Activated naive CD4-positive, alpha-beta T cell treated with anti-CD3 and anti-CD28 coated beads for 36 hours (primary cell): ENCODE measurements at regions of chr6 and their contacts with region 1.

Region 1: GRCh38 chr6:121055572-121056163 is 278.6 kb downstream of the TBC1D32 start:
- DNase-seq: no peak
- H3K4me3 Mint-ChIP-seq: no peak overlapping the region
- H3K27ac Mint-ChIP-seq: no peak overlapping the region
- H3K4me1 Mint-ChIP-seq: no peaks in the 10 kb centered on the region
- H3K27me3 Mint-ChIP-seq: no peaks in the 10 kb centered on the region

Region 2: GRCh38 chr6:119742188-119742803 is 1313.4 kb before region 1 on chr6:
- CTCF ChIA-PET with region 1: no interaction called
- intact Hi-C with region 1: loop called (anchors 5 kb)
- DNase-seq: peak; percentile 72
- H3K4me3 Mint-ChIP-seq: no peak overlapping the region
- H3K27ac Mint-ChIP-seq: no peak overlapping the region
- H3K4me1 Mint-ChIP-seq: no peaks in the 10 kb centered on the region
- H3K27me3 Mint-ChIP-seq: no peaks in the 10 kb centered on the region

Region 3: GRCh38 chr6:121305957-121306607 is 250.4 kb after region 1 on chr6:
- CTCF ChIA-PET with region 1: interaction called, 11 read pairs
- intact Hi-C with region 1: loop called (anchors 1 kb)
- DNase-seq: no peak
- H3K4me3 Mint-ChIP-seq: no peak overlapping the region
- H3K27ac Mint-ChIP-seq: no peak overlapping the region
- H3K4me1 Mint-ChIP-seq: no peaks in the 10 kb centered on the region
- H3K27me3 Mint-ChIP-seq: no peaks in the 10 kb centered on the region

Region 4: GRCh38 chr6:121399966-121400365 is 344.3 kb after region 1 on chr6:
- CTCF ChIA-PET with region 1: no interaction called
- intact Hi-C with region 1: loop called (anchors 1 kb)
- DNase-seq: no peak
- H3K4me3 Mint-ChIP-seq: no peak overlapping the region
- H3K27ac Mint-ChIP-seq: no peak overlapping the region
- H3K4me1 Mint-ChIP-seq: no peaks in the 10 kb centered on the region
- H3K27me3 Mint-ChIP-seq: no peaks in the 10 kb centered on the region

Region 5: GRCh38 chr6:122033539-122034181 is 978.0 kb after region 1 on chr6:
- CTCF ChIA-PET with region 1: no interaction called
- intact Hi-C with region 1: loop called (anchors 1 kb)
- DNase-seq: no peak
- H3K4me3 Mint-ChIP-seq: no peak overlapping the region
- H3K27ac Mint-ChIP-seq: no peak overlapping the region
- H3K4me1 Mint-ChIP-seq: peaks cover 4% of the 10 kb centered on the region
- H3K27me3 Mint-ChIP-seq: peaks cover 3% of the 10 kb centered on the region

Region 6: DNA sequence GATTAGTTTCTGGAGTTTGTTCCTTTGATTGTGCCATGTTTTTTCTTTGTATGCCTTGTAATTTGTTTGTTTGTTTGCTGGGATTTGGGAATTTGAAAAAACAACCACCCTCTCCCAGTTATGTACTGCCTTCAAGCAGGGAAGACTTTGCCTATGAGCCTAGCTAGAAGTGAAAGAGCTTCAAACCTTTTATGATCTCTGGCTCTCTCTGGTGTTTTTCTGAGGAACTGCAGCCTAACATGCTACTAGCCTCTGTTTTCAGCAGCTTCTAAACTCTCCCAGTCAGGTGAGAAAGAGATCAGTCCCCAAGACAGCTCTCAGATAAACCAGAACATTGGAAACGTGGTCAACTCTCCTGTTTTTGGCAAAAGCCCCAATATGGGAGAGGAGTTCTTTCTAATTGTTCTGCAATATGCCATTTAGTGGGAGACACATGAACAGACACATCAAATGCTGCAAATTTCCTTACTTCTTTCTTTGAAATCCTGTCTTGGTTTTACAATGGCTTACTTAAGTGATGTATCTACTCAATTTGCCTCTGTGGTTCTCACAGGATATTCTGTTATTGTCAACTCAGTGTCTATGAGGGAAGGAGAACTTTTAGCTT is 1474.9 kb after region 1 on chr6:
- CTCF ChIA-PET with region 1: no interaction called
- intact Hi-C with region 1: loop called (anchors 1 kb)
- DNase-seq: peak; percentile 67
- H3K4me3 Mint-ChIP-seq: no peak overlapping the region
- H3K27ac Mint-ChIP-seq: no peak overlapping the region
- H3K4me1 Mint-ChIP-seq: no peaks in the 10 kb centered on the region
- H3K27me3 Mint-ChIP-seq: peaks cover 22% of the 10 kb centered on the region